Vagina (tissue), 2 donors: ENCODE measurements at regions of chr17 and their contacts with region 1.

Region 1: DNA sequence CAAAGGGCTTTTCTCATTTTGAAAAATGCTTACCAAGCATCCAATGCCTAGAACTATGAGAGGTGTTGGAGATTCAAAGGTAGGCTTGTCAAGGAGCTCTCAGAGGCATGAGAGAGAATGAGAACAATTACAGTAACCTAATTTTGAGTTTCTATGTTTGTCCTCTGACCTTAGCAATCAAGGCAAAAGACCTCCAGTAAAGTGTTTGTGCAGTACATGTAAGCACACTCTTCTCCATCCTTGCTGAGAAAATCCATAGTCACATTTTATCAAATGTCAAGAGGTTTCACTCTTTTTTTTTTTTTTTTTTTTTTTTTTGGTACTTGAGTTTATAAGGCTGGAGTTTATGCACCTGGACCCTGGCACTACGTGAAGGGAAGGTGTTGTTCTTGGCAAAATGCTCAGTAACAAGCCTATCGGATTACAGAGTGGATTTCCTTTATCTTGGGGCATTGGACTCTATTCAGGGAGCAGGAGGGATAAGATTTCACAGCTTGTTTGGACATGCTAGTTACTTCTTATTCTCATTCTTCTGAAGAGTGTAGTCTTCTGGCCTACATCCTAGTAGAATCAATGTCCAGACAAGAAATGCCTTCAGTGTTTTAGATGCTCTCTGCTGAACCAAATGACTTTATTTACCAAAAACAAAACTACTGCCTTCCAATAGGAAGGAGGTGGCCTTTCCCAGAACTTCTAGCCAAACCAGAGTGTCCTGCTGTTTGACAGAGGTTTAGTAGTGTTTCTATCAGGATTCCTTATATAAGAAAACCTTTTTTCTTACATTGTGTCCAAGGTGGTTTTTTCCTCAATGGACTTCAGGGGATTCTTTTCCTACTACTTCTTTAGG is 21.9 kb downstream of the KCNJ2 start:
- DNase-seq: no peak
- H3K4me3 ChIP-seq: no peak overlapping the region
- H3K27ac ChIP-seq: no peak overlapping the region
- H3K4me1 ChIP-seq: no peaks in the 10 kb centered on the region
- H3K27me3 ChIP-seq: no peaks in the 10 kb centered on the region
- CTCF ChIP-seq: no peak
- POLR2A ChIP-seq: no peak

Region 2: DNA sequence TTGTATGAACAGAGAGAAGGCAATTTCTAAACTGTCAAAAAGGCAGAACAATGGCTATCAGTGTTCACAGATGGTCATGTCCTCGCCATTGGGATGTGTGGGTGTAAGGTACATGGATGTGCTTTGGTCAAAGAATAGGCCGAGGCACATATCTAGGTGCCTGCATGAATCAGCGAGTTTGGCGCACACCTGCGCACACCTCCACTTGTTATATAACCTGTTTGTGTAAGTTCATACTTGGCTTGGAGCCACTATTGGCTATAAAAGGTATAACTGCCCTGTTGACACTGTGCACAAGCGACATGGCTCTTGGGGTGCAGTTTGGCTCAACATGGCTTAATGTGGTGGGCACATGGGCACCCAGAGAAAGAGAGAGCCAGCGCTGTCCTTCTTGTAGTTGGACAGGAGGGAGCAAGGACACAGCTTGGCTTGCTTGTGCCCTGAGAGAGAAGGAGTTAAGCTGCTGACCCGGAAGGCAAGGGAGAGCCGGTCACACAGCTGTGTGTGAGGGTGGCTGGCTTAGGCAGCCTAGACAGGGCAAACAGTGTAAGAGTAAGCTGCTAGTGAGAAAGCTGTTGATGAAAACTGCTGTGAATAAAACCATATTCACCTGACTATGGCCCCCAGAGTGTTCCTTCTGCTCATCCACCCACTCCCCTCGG is 477.2 kb after region 1 on chr17:
- intact Hi-C with region 1: loop called (anchors 5 kb)
- DNase-seq: no peak
- H3K4me3 ChIP-seq: no peak overlapping the region
- H3K27ac ChIP-seq: no peak overlapping the region
- H3K4me1 ChIP-seq: no peaks in the 10 kb centered on the region
- H3K27me3 ChIP-seq: no peaks in the 10 kb centered on the region
- CTCF ChIP-seq: no peak
- POLR2A ChIP-seq: no peak